ENCODE measurements at regions of chr22 and their contacts with region 1.

Region 1: DNA sequence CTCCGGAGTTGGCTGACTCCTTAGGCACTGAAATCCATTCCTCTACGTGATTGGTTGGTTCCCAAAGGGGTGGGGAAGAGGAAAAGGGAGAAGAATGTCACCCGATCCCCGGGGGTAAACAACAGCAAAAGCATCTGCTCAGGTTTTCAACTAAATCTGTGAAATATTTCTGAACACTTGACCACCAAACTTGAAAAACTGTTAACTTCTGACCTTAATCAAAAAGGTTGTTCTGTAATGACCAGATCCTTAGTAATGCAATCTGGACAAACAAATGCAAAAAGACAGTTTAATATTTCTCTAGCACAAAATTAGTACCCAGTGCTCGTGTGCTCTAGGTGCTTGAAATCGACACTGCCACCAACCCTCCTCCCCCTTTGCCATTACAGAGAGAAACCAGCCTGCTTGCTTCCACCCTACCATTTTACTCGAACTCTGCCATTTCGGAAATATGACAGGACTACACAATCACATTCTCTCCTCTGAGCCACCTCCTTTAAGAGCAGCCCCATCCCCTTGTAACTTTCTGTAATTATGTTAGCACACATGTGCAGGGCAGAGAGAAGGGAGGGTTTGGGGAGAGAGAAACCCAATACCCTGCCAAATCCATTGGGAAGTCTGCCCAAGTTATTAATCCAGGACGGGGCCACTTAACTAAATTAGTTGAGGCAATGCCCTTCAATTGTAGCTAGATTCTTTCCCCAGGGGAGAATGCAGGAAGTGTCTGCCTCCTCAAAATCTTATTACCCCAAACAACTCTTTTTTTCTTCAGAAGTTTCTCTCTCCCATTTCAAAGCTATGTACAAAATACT is 113.8 kb downstream of the RBFOX2 start:
- DNase-seq: peak; percentile 23
- ATAC-seq: peak; percentile 89

Region 2: DNA sequence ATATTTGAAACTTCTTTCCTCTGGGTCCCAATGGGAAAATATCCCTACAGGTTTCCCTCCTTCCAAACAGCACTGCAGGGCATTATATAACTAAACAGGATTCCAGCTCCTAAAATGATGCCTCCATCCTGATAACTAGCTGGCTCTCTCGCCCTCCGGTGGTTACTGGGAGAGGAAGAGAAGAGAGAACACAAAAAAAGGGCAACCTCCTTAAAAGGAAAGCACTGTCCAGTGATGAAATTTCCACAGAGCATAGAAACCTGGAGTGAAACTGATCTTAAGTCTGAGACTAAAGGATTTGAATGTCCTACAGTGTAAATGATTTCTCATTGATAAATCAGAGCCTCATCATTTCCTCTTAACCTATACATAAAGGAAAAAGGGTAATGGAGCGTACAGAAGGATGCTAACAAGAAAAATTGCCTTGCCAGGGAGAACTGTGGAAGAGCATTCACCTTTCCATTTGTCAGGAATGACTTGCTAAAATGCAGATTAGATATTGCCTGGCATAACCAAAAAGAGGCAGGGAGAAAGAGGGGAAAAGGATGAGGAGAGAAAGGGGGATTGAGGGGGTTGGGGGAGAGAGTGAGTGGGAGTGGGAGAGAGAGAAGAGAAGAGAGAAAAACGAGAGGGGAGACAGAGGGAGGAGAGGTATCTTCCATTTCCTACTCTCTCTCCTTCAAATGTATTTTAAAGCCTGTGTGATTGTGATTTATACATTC is 75.9 kb before region 1 on chr22:
- intact Hi-C with region 1: loop called (anchors 10 kb)
- DNase-seq: no peak
- ATAC-seq: peak; percentile 4